Activated naive CD4-positive, alpha-beta T cell treated with anti-CD3 and anti-CD28 coated beads, Interleukin-2, amount 10 ng/mL, durations not matched to agents 7 days and 5 days (primary cell): ENCODE measurements at regions of chr5 and their contacts with region 1.

Region 1: DNA sequence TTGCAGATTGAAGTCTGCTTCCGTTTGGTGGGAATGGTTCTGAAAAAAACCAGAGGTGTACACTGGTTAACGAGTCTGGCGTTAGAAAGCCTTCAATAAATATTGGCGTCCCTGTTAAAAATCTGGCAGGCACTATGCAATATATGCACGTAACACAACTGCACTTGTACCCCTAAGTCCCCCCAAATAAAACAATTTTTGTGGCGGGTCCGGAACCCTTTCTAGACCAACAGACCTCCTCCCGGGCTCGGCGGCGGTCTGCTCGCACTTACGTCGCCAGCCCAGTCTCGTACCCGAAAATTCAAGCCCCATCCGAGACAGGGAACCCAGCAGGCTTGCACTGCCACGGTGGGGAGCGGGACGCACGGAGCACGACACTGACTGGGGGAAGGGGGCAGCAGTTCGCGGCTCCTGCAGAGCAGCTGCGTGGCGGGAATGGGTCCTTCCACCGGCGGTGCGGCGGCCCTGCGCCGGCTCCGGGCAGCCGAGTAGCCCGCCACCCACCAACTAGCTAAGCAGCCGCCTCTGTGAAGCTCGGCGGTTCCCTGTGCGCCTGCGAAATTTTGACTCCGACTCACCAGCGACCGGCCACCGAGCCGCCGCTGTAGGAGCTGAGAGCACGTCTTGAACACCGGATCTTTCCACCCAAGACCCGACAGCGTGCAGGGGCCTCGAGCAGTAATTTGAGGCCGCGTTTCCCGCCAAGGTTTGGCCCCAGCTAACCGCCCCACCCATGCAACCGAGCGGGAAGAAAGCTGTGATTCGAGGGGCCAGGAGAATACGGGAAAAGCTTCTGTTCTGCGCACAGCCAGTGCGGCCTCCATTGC is 3.9 kb downstream of the MCIDAS start:
- DNase-seq: peak; percentile 45
- H3K4me3 Mint-ChIP-seq: peak overlapping the region; percentile 21
- H3K27ac Mint-ChIP-seq: no peak overlapping the region
- H3K4me1 Mint-ChIP-seq: peaks cover 48% of the 10 kb centered on the region
- H3K27me3 Mint-ChIP-seq: peaks cover 97% of the 10 kb centered on the region

Region 2: GRCh38 chr5:55232985-55233928 is 10.1 kb after region 1 on chr5 and contains the start of gene CCNO:
- CTCF ChIA-PET with region 1: interaction called, 16 read pairs
- DNase-seq: peak; percentile 74
- H3K4me3 Mint-ChIP-seq: peak within 1 kb of the TSS; percentile 73
- H3K27ac Mint-ChIP-seq: peak within 1 kb of the TSS; percentile 59
- H3K4me1 Mint-ChIP-seq: peaks cover 28% of the 10 kb centered on the region
- H3K27me3 Mint-ChIP-seq: peaks cover 95% of the 10 kb centered on the region

Region 3: DNA sequence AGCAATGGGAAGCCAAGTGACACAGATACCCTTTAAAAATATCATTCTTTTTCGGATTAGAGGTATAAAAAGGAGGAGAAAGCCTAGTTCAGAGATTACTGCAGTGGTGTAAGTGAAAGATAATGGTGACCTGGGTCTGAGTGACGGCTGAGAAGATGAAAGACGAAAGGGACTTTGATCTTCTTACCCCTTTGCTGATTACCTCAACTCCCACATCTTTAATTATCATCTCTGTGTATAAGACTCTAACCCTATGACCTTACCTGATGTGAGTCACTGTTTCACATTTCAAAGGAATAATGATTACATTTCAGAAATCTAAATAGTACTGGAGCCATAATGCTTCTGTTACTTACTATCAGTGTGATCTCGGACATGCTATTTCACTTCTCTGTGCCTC is 31.6 kb after region 1 on chr5:
- CTCF ChIA-PET with region 1: no interaction called
- DNase-seq: no peak
- H3K4me3 Mint-ChIP-seq: no peak overlapping the region
- H3K27ac Mint-ChIP-seq: no peak overlapping the region
- H3K4me1 Mint-ChIP-seq: no peaks in the 10 kb centered on the region
- H3K27me3 Mint-ChIP-seq: peaks cover 8% of the 10 kb centered on the region